ENCODE measurements at regions of chr15 and their contacts with region 1.

Region 1: GRCh38 chr15:51192521-51193280 is 98.0 kb upstream of the TNFAIP8L3 start:
- DNase-seq: peak; percentile 85
- ATAC-seq: peak; percentile 74
- H3K4me3 Mint-ChIP-seq: no peak overlapping the region
- H3K27ac Mint-ChIP-seq: no peak overlapping the region
- H3K4me1 Mint-ChIP-seq: no peaks in the 10 kb centered on the region
- H3K27me3 Mint-ChIP-seq: peaks cover 22% of the 10 kb centered on the region

Region 2: GRCh38 chr15:50933341-50933740 is 259.4 kb before region 1 on chr15:
- CTCF ChIA-PET with region 1: no interaction called
- POLR2A ChIA-PET with region 1: no interaction called
- DNase-seq: no peak
- ATAC-seq: no peak
- H3K4me3 Mint-ChIP-seq: no peak overlapping the region
- H3K27ac Mint-ChIP-seq: no peak overlapping the region
- H3K4me1 Mint-ChIP-seq: no peaks in the 10 kb centered on the region
- H3K27me3 Mint-ChIP-seq: no peaks in the 10 kb centered on the region

Region 3: DNA sequence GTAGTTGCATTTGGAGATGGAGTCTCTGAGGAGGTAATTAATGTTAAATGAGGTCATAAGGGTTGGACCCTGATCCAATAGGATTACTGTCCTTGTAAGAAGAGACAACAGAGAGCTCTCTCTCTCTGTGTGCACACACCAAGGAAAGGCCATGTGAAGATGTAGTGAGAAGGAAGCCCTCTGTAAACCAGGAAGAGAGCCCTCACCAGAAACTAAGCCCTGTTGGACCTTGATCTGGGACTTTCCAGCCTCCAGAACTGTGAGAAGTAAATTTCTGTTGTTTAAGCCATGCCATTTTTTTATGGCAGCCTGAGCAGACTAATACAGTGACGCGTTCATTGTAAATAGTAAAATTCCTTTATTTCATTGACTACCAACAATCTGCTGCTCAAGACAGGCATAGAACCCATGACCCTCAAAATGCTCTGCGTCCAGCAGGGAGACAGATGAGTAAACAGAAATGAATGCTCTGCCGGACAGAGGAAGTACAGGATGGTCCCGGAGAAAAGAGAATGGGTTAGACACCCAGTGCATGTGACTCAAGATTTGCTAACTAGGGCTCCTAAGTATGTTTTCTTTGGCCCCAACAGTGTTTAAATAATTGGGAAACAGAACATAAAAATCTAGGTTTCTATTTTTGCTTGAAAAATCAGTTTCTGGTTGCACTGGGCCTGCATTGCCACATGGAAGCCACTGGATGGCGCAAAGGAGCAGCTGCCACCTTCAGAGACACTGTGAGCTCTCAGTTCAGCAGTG is 60.1 kb before region 1 on chr15:
- CTCF ChIA-PET with region 1: interaction called, 11 read pairs
- POLR2A ChIA-PET with region 1: no interaction called
- DNase-seq: no peak
- ATAC-seq: no peak
- H3K4me3 Mint-ChIP-seq: no peak overlapping the region
- H3K27ac Mint-ChIP-seq: no peak overlapping the region
- H3K4me1 Mint-ChIP-seq: peaks cover 1% of the 10 kb centered on the region
- H3K27me3 Mint-ChIP-seq: peaks cover 25% of the 10 kb centered on the region

Region 4: GRCh38 chr15:51203797-51204196 is 11.1 kb after region 1 on chr15:
- CTCF ChIA-PET with region 1: interaction called, 14 read pairs
- POLR2A ChIA-PET with region 1: no interaction called
- DNase-seq: no peak
- ATAC-seq: no peak
- H3K4me3 Mint-ChIP-seq: no peak overlapping the region
- H3K27ac Mint-ChIP-seq: no peak overlapping the region
- H3K4me1 Mint-ChIP-seq: no peaks in the 10 kb centered on the region
- H3K27me3 Mint-ChIP-seq: peaks cover 11% of the 10 kb centered on the region

Region 5: DNA sequence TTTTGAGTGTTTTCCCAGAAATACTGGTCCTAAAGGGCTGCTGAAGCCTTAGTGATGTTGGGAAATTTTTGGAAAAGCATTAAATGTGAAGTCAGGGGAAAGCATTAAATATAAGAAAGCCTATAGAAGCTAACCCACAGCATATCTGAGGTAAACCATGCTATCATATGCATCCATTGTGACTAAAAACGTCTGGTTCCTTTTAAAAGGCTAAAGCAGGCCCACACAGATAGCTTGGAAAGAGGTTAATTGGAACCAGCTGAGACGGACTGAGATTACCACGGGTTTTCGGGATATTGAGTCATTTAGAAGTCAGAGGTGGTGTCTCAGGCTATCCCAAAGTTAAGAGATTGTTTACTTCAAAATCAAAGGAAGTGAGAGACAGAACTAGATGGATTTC is 67.5 kb after region 1 on chr15:
- CTCF ChIA-PET with region 1: no interaction called
- POLR2A ChIA-PET with region 1: no interaction called
- DNase-seq: no peak
- ATAC-seq: no peak
- H3K4me3 Mint-ChIP-seq: no peak overlapping the region
- H3K27ac Mint-ChIP-seq: no peak overlapping the region
- H3K4me1 Mint-ChIP-seq: no peaks in the 10 kb centered on the region
- H3K27me3 Mint-ChIP-seq: peaks cover 8% of the 10 kb centered on the region

Measured in activated CD8-positive, alpha-beta T cell treated with anti-CD3 and anti-CD28 coated beads, Interleukin-2, amount 10 ng/mL, durations not matched to agents 7 days and 5 days (primary cell).